Lower leg skin (tissue), 4 donors: ENCODE measurements at regions of chr2 and their contacts with region 1.

Region 1: DNA sequence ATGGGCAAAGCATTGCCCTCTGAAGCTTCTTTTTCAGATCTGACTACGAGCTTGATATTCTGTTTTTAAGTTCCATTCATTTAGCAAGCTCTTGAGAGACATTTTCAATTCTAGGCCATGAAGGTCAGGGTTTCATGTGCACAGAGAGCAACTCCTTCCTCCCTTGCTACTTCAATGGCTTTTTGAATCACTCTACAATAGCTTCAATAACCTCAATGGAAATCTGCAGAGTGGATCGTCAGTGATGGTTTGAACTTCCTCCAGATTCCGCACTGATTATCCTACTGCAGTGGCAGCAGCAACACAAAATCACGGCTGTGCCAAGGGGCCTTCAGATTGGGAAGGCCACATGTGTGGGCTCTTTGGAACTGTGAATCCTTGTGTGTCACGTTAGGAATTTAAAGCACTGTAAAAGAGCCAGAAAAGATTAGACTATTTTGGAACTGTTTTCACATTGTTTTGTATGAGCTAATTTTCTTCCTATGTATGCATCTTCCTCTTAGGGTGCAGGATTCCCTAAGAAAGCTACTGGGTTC is 88.4 kb upstream of the MGAT4A start:
- DNase-seq: peak in 1 of 2 donors; percentile 2
- H3K4me3 ChIP-seq: no peak overlapping the region
- CTCF ChIP-seq: no peak
- POLR2A ChIP-seq: no peak

Region 2: GRCh38 chr2:97995734-97996624 is 823.3 kb before region 1 on chr2 and contains the start of gene TMEM131:
- intact Hi-C with region 1: no loop called
- DNase-seq: peak; percentile 92 to 99
- H3K4me3 ChIP-seq: peak within 1 kb of the TSS; percentile 76
- CTCF ChIP-seq: no peak
- POLR2A ChIP-seq: peak in 1 of 2 donors; percentile 30
- total RNA-seq, gene TMEM131: 32.8 to 54.8 (median 41.2) TPM

Region 3: DNA sequence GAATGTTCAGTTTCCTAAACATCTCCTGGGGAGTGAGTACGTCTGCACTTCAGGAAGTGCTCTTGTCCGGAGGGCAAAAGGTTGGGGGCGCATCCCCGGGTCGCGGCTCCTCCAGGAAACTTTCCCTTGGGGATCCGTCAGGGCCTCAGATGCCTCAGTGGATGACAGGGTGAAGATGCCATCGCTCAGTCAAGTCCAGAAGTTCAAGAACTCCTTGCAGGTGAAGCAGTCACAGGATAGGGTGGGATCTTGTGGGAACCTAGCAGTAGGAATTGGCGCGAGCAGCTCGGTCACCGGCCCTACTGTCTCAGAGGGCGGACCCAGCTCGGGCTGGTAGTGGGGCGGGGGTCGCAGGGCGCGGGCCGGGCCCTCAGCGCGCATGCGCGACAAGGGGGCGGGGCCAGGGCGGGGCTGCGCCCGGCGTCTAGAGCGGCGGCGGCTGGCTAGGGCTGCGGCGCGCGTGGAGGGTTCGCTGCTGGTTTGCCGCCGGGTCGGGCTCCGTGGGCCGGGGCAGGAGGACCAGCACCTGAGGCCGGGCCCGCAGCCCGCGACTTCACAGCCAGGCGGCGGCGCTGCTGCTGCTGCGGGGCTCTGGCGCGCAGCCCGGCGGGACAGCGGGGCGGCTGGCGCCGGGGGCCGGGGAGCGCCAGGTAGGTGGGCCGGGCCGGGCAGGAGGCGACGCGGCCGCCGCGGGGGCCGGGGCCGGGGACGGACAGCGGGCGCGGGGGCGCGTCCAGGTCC is 374.7 kb before region 1 on chr2 and contains the start of gene INPP4A:
- intact Hi-C with region 1: no loop called
- DNase-seq: peak in 1 of 2 donors; percentile 92
- H3K4me3 ChIP-seq: peak within 1 kb of the TSS; percentile 66
- CTCF ChIP-seq: no peak
- POLR2A ChIP-seq: no peak
- total RNA-seq, gene INPP4A: 6.7 to 15.5 (median 10.7) TPM

Region 4: DNA sequence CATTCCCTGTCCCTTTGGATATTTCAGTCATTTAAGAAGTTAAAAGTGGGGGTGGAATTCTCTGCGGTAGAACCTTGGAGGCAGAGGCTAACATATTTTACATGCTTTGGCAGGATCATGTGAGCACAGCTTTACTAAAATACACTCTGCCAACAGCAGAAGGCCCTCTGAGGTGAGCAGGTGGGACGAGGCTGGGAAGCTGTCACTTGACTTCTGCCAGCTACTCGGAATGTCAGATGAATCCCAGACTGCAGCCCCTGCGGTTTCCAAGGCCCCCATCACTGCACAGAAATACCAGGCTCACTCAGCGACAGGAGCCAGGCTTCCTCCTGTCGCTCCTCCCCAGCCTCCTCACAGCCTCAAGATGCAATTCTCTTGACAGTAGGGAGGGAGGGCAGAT is 891.4 kb after region 1 on chr2:
- intact Hi-C with region 1: no loop called
- DNase-seq: no peak
- H3K4me3 ChIP-seq: no peak overlapping the region
- CTCF ChIP-seq: no peak
- POLR2A ChIP-seq: no peak

Region 5: DNA sequence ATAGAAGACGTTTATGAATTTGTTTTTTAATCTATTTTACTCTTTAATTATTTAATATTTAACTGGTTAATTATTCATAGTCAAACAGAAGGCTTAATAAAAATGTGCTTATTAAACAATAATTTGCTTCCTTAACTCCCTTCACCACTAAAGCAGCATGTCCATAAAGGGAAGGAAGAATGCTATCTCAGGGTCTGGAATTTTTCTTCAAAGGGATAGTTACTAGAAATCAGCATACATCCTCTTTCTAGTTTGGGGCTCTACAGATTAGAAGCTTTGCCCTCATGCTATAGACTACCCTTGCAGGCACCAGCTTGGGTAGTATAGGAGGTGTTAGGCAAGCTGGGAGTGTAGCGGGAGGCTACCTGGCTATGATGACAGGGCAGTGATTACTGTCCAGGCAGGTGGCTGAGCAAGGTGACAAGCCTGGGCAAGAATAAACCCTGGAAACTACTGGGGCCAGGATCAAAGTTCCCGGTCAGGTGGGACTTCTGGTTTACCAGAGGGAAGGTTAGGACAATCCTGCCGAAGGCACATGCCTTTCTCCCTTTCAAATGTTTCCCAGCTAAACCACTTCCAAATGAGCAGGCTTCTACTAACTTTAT is 946.5 kb after region 1 on chr2:
- intact Hi-C with region 1: loop called (anchors 10 kb)
- DNase-seq: no peak
- H3K4me3 ChIP-seq: no peak overlapping the region
- CTCF ChIP-seq: no peak
- POLR2A ChIP-seq: no peak